ENCODE measurements at regions of chr3 and their contacts with region 1.

Region 1: DNA sequence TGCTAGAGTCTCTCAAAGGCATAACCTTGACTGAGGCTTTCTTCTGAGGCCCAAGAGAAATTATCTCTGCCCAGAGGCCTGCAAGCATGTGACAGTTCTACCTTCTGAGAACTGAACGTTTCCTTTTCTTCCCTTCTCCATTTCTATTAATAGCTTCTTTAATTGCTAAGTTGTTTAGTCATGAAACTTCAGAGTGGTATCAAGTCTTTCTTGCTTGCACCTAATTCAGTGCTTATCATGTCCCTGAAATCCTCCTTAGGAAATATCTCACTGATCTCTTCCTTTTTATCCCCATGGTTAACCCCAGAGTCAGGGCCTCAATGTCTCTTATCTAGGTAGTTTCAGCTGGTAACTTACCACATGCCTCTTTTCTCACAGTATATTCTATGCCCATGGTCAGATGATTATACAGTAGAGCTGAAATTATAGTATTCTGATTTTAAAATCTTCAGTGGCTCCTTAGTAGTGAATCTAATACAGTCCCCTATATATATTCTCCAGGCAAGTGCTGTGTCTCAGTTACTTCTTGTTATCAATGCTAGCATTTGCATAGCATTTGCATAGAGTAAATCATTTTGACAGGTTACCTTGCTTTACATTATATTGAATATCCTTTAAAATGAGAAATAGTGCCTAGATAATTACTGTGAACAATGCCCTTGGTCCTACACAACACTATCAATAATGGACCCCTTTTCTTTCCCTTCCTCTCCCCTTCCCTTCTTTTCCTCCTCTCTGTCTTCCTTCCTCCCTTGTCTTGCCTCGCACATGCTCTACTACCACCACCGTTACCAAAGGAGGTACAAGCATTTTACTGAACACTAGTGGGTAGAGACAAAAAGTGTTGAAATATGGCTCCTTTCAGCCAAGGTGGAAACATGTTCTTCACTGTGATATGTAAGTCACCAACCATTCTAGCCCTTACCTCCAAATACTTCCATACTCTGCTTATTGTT is 33.0 kb downstream of the KBTBD8 start:
- DNase-seq: no peak
- ATAC-seq: no peak

Region 2: GRCh38 chr3:66989860-66990665 is 41.0 kb before region 1 on chr3:
- intact Hi-C with region 1: loop called (anchors 5 kb)
- DNase-seq: no peak
- ATAC-seq: peak; percentile 75